Body of pancreas (tissue), 4 donors: ENCODE measurements at regions of chr17 and their contacts with region 1.

Region 1: GRCh38 chr17:17500997-17501605 is 4.9 kb upstream of the RASD1 start:
- DNase-seq: peak in 1 of 4 donors; percentile 70
- ATAC-seq: no peak
- H3K4me3 ChIP-seq: no peak overlapping the region
- H3K27ac ChIP-seq: no peak overlapping the region
- H3K4me1 ChIP-seq: peaks cover 12% of the 10 kb centered on the region
- H3K27me3 ChIP-seq: no peaks in the 10 kb centered on the region
- CTCF ChIP-seq: peak in 1 of 7 experiments; percentile 41
- POLR2A ChIP-seq: no peak

Region 2: GRCh38 chr17:16081507-16082087 is 1419.5 kb before region 1 on chr17:
- intact Hi-C with region 1: no loop called
- DNase-seq: no peak
- ATAC-seq: no peak
- H3K4me3 ChIP-seq: no peak overlapping the region
- H3K27ac ChIP-seq: no peak overlapping the region
- H3K4me1 ChIP-seq: peaks cover 7% of the 10 kb centered on the region
- H3K27me3 ChIP-seq: no peaks in the 10 kb centered on the region
- CTCF ChIP-seq: no peak
- POLR2A ChIP-seq: no peak

Region 3: GRCh38 chr17:17557796-17558195 is 56.7 kb after region 1 on chr17:
- intact Hi-C with region 1: loop called (anchors 5 kb)
- DNase-seq: peak in 3 of 4 donors; percentile 37 to 67 (median 46)
- ATAC-seq: peak; percentile 44
- H3K4me3 ChIP-seq: no peak overlapping the region
- H3K27ac ChIP-seq: peak overlapping the region in 2 of 4 donors; percentile 41 to 48
- H3K4me1 ChIP-seq: no peaks in the 10 kb centered on the region
- H3K27me3 ChIP-seq: no peaks in the 10 kb centered on the region
- CTCF ChIP-seq: no peak
- POLR2A ChIP-seq: no peak

Region 4: DNA sequence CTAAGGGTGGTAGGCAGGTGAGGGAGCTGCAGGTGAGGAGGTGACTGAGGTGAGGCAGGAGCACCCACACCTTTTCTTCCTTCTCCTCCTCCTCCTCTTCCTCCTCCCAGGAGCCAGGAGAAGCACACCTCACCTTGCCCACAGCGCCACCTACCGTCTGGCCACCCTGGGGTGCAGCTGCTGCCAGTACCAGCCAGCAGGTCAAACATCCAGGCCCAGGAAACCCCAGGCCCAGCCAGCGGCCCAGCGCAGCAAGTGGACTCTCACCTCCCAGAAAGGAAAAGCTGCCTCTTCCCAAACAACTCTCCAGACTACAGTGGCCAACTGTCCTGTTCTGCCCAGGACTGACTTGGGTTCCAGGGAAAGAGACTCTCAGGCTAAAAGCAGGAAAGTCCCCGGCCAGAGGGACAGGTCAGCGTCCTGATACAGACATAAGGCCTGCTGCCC is 67.7 kb after region 1 on chr17:
- intact Hi-C with region 1: loop called (anchors 2 kb)
- DNase-seq: peak; percentile 85 to 90 (median 87)
- ATAC-seq: peak; percentile 66
- H3K4me3 ChIP-seq: no peak overlapping the region
- H3K27ac ChIP-seq: peak overlapping the region in 3 of 4 donors; percentile 13 to 60 (median 42)
- H3K4me1 ChIP-seq: peaks cover 46% of the 10 kb centered on the region
- H3K27me3 ChIP-seq: no peaks in the 10 kb centered on the region
- CTCF ChIP-seq: peak; percentile 77 to 93 (median 88)
- POLR2A ChIP-seq: no peak